ENCODE measurements at regions of chr12 and their contacts with region 1.

Region 1: DNA sequence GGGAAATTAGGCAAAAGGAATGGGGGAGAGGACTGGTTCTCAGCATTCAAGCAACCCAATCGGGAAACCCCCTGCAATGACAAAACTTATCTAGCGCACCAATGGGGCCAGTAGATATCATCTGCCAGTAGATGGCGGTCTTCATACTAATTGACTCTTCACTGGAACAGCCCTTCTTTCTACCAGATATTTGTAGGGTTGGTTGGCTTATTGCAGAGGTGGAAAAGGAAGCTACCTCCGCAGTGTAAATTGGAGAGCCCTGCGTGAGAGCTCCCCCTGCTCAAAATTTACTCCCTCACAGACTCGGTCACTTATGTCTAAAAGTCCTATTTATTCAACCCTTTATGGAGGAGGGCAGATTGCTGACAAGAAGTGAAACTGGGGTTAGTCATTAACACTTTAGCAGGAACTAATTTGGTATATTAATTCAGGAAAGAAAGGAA is 166.1 kb upstream of the CCND2 start:
- DNase-seq: peak; percentile 52 to 93
- ATAC-seq: peak; percentile 98 to 99 (median 98)
- H3K4me3 ChIP-seq: no peak overlapping the region
- H3K4me3 Mint-ChIP-seq: no peak overlapping the region
- H3K27ac ChIP-seq: peak overlapping the region; percentile 70
- H3K27ac Mint-ChIP-seq: peak overlapping the region; percentile 92 to 93
- H3K4me1 ChIP-seq: peaks cover 19% of the 10 kb centered on the region
- H3K4me1 Mint-ChIP-seq: peaks cover 20% of the 10 kb centered on the region in 2 donors
- H3K27me3 ChIP-seq: no peaks in the 10 kb centered on the region
- H3K27me3 Mint-ChIP-seq: peaks cover 0 to 9% of the 10 kb centered on the region in 2 donors
- CTCF ChIP-seq: peak; percentile 75

Region 2: DNA sequence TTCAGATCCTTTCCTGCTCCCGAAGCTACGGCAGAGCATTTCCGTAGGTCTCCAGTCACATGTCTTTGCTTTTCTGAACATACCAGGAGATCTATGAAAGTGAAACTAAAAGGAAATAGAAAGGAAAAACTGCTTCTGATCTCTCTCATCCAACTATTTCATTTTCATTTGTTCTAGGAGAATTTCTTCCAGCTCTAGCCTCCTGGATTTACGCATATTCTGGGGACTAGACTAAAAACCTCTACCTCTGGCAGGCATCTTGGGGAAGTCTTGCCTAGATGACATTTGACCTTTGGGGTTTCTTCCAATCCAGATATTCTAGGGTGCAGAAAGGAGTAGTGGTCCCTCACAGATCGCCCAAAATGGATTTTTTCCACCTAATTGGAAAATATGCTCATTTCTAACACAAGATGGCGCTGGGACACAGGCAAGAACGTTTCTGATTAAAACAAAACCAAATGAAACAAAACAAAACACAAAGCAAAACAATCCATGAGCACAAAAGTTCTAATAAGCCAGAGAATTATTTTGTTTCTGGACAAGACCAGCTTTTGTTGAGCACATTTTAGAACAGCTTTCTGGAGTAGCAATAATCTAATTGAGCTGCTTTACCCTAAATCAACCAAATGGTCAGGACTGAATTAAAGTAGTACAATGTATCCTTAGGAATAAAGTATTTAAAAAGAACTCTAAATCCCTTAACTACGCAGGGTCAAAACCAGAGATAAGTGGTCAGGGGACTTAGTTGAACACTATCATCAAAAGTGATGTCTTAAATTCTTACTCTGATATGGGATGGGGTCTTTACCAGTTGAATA is 222.0 kb before region 1 on chr12:
- intact Hi-C with region 1: loop called (anchors 5 kb)
- DNase-seq: peak in 1 of 2 donors; percentile 83
- ATAC-seq: peak in 2 of 3 donors; percentile 57 to 62
- H3K4me3 ChIP-seq: no peak overlapping the region
- H3K4me3 Mint-ChIP-seq: no peak overlapping the region
- H3K27ac ChIP-seq: no peak overlapping the region
- H3K27ac Mint-ChIP-seq: no peak overlapping the region
- H3K4me1 ChIP-seq: no peaks in the 10 kb centered on the region
- H3K4me1 Mint-ChIP-seq: peaks cover 5 to 6% of the 10 kb centered on the region in 2 donors
- H3K27me3 ChIP-seq: no peaks in the 10 kb centered on the region
- H3K27me3 Mint-ChIP-seq: peaks cover 6 to 13% of the 10 kb centered on the region in 2 donors
- CTCF ChIP-seq: peak; percentile 78

Region 3: DNA sequence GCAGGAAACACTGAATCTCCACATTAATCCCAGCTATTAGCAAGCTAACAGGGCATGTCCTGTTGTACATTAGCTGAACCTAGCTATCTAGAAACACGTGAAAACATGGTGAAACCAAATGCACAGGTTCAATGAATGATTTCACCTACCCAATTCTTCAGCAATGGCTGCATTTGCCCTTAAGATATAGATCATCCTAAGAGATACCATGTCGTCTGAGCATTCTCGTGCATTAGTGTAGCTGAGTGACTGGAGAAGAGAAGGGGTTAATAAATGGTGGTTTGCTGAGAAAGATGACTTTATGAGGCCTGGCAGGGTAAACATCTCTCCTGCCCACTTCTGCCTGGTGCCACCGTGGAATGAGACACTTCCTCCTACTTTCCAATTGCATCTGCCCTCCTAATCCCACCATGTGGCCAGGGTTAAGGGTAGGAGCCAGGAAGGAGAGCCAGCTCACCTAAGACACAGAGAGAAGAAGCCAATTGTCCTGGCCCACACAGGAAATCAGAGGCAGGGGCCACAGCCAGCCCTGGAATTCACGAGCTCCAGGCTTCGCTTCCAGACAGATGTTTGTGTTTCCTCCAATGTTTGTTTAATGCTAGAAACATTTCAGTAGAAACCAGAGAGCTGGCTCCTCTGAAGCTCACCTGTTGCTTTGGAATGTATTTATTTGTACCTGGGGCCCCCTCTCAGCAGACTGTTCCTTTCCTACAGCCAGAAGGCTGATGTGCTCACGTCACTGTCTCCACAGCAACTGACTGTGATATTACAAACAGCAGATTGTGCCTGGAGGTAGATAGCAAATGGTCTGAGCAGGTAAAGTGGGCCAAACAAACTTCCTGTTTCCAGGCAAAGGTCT is 108.3 kb before region 1 on chr12:
- intact Hi-C with region 1: loop called (anchors 10 kb)
- DNase-seq: peak in 1 of 2 donors; percentile 60
- ATAC-seq: no peak
- H3K4me3 ChIP-seq: no peak overlapping the region
- H3K4me3 Mint-ChIP-seq: no peak overlapping the region
- H3K27ac ChIP-seq: no peak overlapping the region
- H3K27ac Mint-ChIP-seq: no peak overlapping the region
- H3K4me1 ChIP-seq: no peaks in the 10 kb centered on the region
- H3K4me1 Mint-ChIP-seq: no peaks in the 10 kb centered on the region
- H3K27me3 ChIP-seq: no peaks in the 10 kb centered on the region
- H3K27me3 Mint-ChIP-seq: peaks cover 2 to 13% of the 10 kb centered on the region in 2 donors
- CTCF ChIP-seq: no peak

Region 4: GRCh38 chr12:4143896-4144295 is 36.4 kb after region 1 on chr12:
- intact Hi-C with region 1: loop called (anchors 5 kb)
- DNase-seq: peak in 1 of 2 donors; percentile 70
- ATAC-seq: peak in 2 of 3 donors; percentile 27 to 33
- H3K4me3 ChIP-seq: no peak overlapping the region
- H3K4me3 Mint-ChIP-seq: peak overlapping the region; percentile 57
- H3K27ac ChIP-seq: peak overlapping the region; percentile 90
- H3K27ac Mint-ChIP-seq: peak overlapping the region; percentile 93 to 97
- H3K4me1 ChIP-seq: peaks cover 28% of the 10 kb centered on the region
- H3K4me1 Mint-ChIP-seq: peaks cover 14 to 16% of the 10 kb centered on the region in 2 donors
- H3K27me3 ChIP-seq: no peaks in the 10 kb centered on the region
- H3K27me3 Mint-ChIP-seq: no peaks in the 10 kb centered on the region
- CTCF ChIP-seq: no peak

Region 5: DNA sequence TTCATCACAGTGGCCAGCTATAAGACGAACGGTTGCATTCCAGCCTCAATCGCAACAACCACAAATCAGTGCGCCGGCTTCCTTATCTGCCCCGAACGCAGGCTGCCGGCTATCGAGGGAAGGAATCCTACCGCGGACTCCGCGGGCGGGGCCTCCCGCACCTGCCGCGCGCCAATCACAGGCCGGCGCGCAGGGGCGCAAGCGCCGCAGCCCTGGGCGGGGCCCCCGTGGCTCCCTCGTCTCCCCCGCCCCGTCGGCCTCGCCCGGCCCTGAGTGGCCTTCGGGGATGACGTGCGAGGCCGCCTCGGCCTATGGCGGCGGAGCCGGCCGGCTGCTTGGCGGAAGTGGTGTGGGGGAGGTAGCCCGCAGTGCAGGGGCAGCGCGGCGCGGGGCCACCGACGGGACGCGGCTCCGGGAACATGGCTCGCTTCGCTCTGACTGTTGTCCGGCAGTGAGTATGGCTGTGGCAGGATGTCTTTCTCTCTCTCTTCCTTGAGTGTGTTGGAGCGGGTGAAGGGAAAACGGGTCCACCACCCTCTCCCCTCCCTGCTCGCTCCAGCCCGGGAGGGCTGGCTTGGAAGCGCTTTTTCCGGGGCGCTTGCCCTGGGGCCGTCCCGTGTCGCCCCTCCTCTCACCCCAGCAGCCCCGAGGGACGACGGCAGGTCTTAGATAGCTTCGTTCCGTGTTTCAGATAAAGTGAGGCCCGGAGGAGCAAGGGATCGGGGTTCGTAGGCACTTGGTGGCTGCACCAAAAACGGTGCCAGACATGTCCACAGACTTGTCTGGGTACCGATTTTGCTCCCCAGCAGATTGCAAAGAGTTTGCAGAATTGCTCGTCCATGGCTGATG is 213.6 kb after region 1 on chr12 and contains the start of gene TIGAR:
- intact Hi-C with region 1: loop called (anchors 2 kb)
- DNase-seq: peak; percentile 93 to 96
- ATAC-seq: peak; percentile 96 to 100 (median 97)
- H3K4me3 ChIP-seq: peak within 1 kb of the TSS; percentile 98
- H3K4me3 Mint-ChIP-seq: peak within 1 kb of the TSS; percentile 95
- H3K27ac ChIP-seq: peak within 1 kb of the TSS; percentile 86
- H3K27ac Mint-ChIP-seq: peak within 1 kb of the TSS; percentile 91 to 95
- H3K4me1 ChIP-seq: peaks cover 22% of the 10 kb centered on the region
- H3K4me1 Mint-ChIP-seq: peaks cover 30 to 33% of the 10 kb centered on the region in 2 donors
- H3K27me3 ChIP-seq: no peaks in the 10 kb centered on the region
- H3K27me3 Mint-ChIP-seq: no peaks in the 10 kb centered on the region
- CTCF ChIP-seq: no peak
- total RNA-seq, gene TIGAR: 6.1 to 7.4 (median 7.3) TPM

Measured in natural killer cell (primary cell).